ENCODE measurements at regions of chr12 and their contacts with region 1.

Region 1: DNA sequence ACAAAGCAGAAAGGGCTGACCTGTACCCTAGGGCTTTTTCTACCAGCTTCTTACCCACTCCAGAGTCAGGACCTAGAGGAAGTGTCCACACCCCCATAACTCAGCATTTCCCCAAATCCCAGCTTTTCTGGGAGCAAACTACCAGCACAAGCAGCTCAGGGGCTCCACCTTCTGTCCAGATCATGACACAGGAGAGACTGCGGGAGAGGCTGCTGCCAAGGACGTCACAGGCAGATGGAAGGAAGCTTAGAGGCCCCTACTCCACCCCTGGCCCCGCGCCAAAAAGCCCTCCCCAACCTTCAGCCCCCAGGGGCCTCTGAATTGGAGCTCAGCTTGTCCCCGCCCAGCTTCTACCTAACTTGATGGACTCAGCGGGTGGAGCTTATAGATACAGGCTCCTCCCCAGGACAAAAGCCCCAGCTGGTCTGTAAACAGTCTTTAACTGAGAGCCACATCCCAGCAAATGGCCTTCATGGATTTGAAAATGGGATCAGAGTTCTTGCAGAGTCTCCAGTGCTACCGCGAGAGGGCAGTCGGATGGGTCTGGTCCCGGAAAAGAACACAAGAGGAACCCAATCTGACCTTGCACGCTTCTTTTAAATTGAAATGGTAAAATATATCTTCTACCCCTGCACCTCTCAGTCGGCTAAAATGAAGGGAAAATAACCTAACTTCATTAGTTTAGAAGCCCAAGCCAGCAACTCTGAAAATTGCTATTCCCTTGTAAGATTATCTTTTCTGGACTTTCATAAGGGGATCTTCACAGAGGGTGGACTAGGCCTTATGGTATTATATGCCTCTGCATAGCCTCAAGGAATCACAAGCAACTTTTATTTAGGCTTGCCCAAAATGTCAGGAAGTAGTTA is 6.8 kb upstream of the BAZ2A start:
- DNase-seq: peak; percentile 98
- ATAC-seq: peak; percentile 69
- H3K4me3 ChIP-seq: peak overlapping the region; percentile 57 to 85 (median 78)
- H3K4me3 Mint-ChIP-seq: peak overlapping the region; percentile 89
- H3K27ac ChIP-seq: peak overlapping the region; percentile 75 to 83
- H3K27ac Mint-ChIP-seq: peak overlapping the region; percentile 95
- H3K4me1 ChIP-seq: peaks cover 46 to 53% of the 10 kb centered on the region in 2 donors
- H3K4me1 Mint-ChIP-seq: peaks cover 59% of the 10 kb centered on the region
- H3K27me3 ChIP-seq: no peaks in the 10 kb centered on the region
- H3K27me3 Mint-ChIP-seq: no peaks in the 10 kb centered on the region
- CTCF ChIP-seq: peak; percentile 70

Region 2: GRCh38 chr12:56299853-56300643 is 336.9 kb before region 1 on chr12 and contains the start of gene CS:
- CTCF ChIA-PET with region 1: no interaction called
- POLR2A ChIA-PET with region 1: no interaction called
- intact Hi-C with region 1: loop called (anchors 1 kb)
- DNase-seq: peak; percentile 98
- ATAC-seq: peak; percentile 96
- H3K4me3 ChIP-seq: peak within 1 kb of the TSS; percentile 78 to 91 (median 83)
- H3K4me3 Mint-ChIP-seq: peak within 1 kb of the TSS; percentile 98
- H3K27ac ChIP-seq: peak within 1 kb of the TSS; percentile 92 to 95
- H3K27ac Mint-ChIP-seq: peak within 1 kb of the TSS; percentile 97
- H3K4me1 ChIP-seq: peaks cover 51 to 61% of the 10 kb centered on the region in 2 donors
- H3K4me1 Mint-ChIP-seq: peaks cover 57% of the 10 kb centered on the region
- H3K27me3 ChIP-seq: no peaks in the 10 kb centered on the region
- H3K27me3 Mint-ChIP-seq: no peaks in the 10 kb centered on the region
- CTCF ChIP-seq: no peak
- total RNA-seq, gene CS: 151 and 154 TPM in 2 replicates

Region 3: GRCh38 chr12:56476972-56477432 is 159.9 kb before region 1 on chr12:
- CTCF ChIA-PET with region 1: no interaction called
- POLR2A ChIA-PET with region 1: no interaction called
- intact Hi-C with region 1: no loop called
- DNase-seq: no peak
- ATAC-seq: no peak
- H3K4me3 ChIP-seq: no peak overlapping the region
- H3K4me3 Mint-ChIP-seq: no peak overlapping the region
- H3K27ac ChIP-seq: no peak overlapping the region
- H3K27ac Mint-ChIP-seq: no peak overlapping the region
- H3K4me1 ChIP-seq: no peaks in the 10 kb centered on the region
- H3K4me1 Mint-ChIP-seq: peaks cover 5% of the 10 kb centered on the region
- H3K27me3 ChIP-seq: no peaks in the 10 kb centered on the region
- H3K27me3 Mint-ChIP-seq: no peaks in the 10 kb centered on the region
- CTCF ChIP-seq: no peak

Region 4: DNA sequence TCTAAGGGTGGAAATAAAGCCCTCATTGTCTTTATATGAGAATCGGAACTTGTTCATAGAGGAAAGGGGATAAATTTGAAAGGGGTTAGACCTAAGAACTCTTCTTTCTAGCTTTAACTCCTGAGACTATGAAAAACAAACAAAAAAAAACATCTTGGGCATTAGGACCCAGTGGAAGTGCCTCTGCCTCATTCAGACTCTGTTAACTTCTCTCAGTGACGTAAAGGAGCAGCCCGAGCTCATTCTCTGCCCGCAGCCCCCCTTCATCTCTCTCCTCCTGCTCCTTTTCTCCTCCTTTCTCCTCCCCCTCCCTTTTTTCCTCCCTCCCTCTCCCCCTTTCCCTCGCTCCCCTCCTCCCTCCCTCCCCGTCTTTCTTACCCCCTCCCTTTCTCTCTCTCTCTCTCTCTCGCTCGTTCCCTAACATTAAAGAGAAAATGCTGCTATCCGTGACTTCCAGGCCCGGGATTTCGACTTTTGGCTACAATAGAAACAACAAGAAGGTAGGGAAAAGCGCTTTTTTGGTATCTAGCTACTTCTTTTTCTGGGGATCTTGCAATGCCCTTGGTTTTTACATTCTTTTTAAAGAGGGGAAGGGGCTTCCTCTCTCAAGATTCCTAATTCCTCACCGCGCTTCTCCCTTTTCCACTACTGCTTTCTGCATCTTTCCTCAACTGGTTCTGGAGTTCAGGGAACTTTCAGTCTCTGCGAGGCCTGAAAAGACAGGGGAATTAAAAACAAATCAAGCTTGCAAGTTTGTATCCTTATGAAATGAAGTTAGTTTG is 115.1 kb before region 1 on chr12 and contains the start of gene RBMS2:
- CTCF ChIA-PET with region 1: interaction called, 14 read pairs
- POLR2A ChIA-PET with region 1: interaction called, 6 read pairs
- intact Hi-C with region 1: loop called (anchors 5 kb)
- DNase-seq: peak; percentile 66
- ATAC-seq: peak; percentile 76
- H3K4me3 ChIP-seq: peak within 1 kb of the TSS; percentile 41 to 48 (median 41)
- H3K4me3 Mint-ChIP-seq: peak within 1 kb of the TSS; percentile 85
- H3K27ac ChIP-seq: peak within 1 kb of the TSS in 1 of 2 donors; percentile 54
- H3K27ac Mint-ChIP-seq: peak within 1 kb of the TSS; percentile 47
- H3K4me1 ChIP-seq: peaks cover 12 to 20% of the 10 kb centered on the region in 2 donors
- H3K4me1 Mint-ChIP-seq: peaks cover 22% of the 10 kb centered on the region
- H3K27me3 ChIP-seq: no peaks in the 10 kb centered on the region
- H3K27me3 Mint-ChIP-seq: peaks cover 4% of the 10 kb centered on the region
- CTCF ChIP-seq: no peak
- total RNA-seq, gene RBMS2: 5.0 and 7.6 TPM in 2 replicates

Region 5: DNA sequence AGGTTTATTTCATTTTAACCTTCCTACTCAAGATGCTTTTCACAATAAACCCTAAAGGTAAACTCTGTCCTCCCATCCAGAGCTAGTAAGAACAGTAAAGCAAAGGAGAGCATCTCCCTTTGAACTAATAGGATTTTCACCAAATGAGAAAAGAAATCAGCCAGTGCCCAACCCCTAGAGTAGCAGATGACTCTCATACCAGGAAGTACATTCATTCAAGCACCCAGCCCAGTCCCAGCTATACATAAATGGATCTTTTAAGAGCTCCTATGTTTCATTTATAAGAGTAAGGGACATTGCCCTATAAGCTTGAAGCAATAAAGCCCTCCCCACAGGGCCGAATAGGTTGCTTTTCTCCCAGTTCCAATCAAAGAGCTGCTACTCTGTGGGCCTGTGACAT is 14.4 kb before region 1 on chr12:
- CTCF ChIA-PET with region 1: interaction called, 30 read pairs
- POLR2A ChIA-PET with region 1: interaction called, 15 read pairs
- intact Hi-C with region 1: no loop called
- DNase-seq: no peak
- ATAC-seq: no peak
- H3K4me3 ChIP-seq: no peak overlapping the region
- H3K4me3 Mint-ChIP-seq: no peak overlapping the region
- H3K27ac ChIP-seq: peak overlapping the region in 1 of 2 donors; percentile 56
- H3K27ac Mint-ChIP-seq: no peak overlapping the region
- H3K4me1 ChIP-seq: peaks cover 21 to 24% of the 10 kb centered on the region in 2 donors
- H3K4me1 Mint-ChIP-seq: peaks cover 59% of the 10 kb centered on the region
- H3K27me3 ChIP-seq: no peaks in the 10 kb centered on the region
- H3K27me3 Mint-ChIP-seq: no peaks in the 10 kb centered on the region
- CTCF ChIP-seq: no peak

Region 6: DNA sequence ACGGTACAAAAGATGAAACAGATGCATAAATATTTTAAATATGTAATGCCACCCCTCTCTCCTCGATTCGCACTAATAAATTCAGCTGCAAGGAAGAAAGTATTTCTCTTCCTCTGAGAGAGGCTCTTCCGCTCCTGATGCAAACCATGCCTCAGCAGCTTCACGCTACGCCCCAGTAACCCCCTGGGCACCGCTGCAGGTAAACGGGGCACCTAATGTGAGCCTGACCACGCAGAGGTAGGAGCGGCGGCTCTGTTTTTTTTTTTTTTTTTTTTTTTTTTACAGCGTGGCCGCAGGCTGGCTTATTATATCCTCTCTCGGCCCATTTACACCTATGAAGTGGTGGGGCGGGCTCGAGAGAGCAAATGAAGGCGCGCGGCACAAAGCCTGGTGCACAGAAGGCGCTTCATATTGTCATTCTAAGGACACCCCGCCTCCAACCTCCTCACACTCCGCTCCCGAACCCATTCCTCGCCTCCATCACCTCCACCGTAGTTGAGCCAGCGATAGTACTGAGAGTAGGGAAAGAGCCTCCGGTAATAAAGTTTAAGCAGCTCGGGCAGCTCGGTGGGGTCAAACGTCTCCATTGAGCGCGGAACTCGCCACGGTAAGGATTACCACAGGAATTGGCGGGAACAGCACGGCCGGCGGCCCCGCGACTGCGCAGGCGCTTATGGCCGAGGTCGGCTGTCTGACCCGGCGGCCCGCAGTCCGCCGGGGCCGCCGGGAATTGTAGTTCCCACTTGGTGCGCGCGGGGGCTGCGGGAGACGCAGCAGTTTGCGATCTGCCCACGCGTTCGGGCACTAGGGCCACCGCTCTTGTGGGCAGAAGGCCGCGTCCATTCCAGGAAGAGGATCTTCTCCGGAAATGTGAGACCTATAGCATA is 115.0 kb after region 1 on chr12 and contains the start of gene PRIM1:
- CTCF ChIA-PET with region 1: interaction called, 10 read pairs
- POLR2A ChIA-PET with region 1: interaction called, 7 read pairs
- intact Hi-C with region 1: loop called (anchors 5 kb)
- DNase-seq: peak; percentile 88
- ATAC-seq: peak; percentile 82
- H3K4me3 ChIP-seq: peak within 1 kb of the TSS; percentile 90 to 100 (median 97)
- H3K4me3 Mint-ChIP-seq: peak within 1 kb of the TSS; percentile 97
- H3K27ac ChIP-seq: peak within 1 kb of the TSS; percentile 79 to 80
- H3K27ac Mint-ChIP-seq: peak within 1 kb of the TSS; percentile 96
- H3K4me1 ChIP-seq: peaks cover 38% of the 10 kb centered on the region in 2 donors
- H3K4me1 Mint-ChIP-seq: peaks cover 44% of the 10 kb centered on the region
- H3K27me3 ChIP-seq: no peaks in the 10 kb centered on the region
- H3K27me3 Mint-ChIP-seq: no peaks in the 10 kb centered on the region
- CTCF ChIP-seq: peak; percentile 21
- total RNA-seq, gene PRIM1: 25.2 and 25.4 TPM in 2 replicates

Region 7: DNA sequence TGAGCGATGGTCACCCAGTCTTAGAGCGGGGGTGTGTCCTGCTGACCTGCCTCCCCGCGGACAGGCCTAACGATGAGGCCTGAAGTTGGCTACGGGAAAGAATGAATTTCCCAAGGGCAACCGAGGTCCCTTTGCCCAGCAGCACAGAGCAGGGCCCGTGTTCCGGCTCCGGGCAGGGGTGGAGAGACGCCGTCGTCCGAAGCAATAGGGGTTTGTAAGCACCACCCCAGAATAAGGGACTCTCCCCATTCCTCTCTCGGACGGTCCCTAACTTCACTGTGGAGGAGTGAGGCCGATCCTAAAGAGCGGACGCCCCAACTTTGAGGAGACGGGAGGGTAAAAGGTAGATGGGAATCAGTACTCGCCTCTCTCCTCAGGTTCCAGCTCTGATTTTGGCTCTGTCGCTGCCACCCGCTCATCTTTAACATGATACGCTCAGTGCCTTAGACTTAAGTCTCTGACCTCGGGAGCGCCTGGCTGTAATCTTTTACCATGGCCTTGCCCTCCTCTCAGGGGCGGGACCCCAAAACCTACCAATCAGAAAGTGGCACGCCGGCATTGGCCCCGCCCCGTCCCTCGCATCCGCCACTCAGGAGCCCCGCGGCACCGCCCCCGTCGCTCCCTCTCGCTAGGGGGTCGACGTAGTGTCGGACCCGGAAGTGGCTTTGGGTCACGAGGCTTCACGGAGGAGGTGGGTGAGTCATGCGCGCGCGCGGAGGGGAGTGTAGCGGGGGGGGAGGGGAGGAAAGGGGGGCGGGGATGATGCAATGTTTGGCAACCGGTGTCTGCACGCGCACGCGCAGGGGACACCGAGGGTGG is 883.4 kb after region 1 on chr12 and contains the start of gene DDIT3:
- CTCF ChIA-PET with region 1: no interaction called
- POLR2A ChIA-PET with region 1: no interaction called
- intact Hi-C with region 1: loop called (anchors 10 kb)
- DNase-seq: peak; percentile 100
- ATAC-seq: peak; percentile 75
- H3K4me3 ChIP-seq: peak within 1 kb of the TSS; percentile 97 to 100 (median 98)
- H3K4me3 Mint-ChIP-seq: peak within 1 kb of the TSS; percentile 99
- H3K27ac ChIP-seq: peak within 1 kb of the TSS; percentile 98 to 100
- H3K27ac Mint-ChIP-seq: peak within 1 kb of the TSS; percentile 100
- H3K4me1 ChIP-seq: peaks cover 42 to 53% of the 10 kb centered on the region in 2 donors
- H3K4me1 Mint-ChIP-seq: peaks cover 57% of the 10 kb centered on the region
- H3K27me3 ChIP-seq: no peaks in the 10 kb centered on the region
- H3K27me3 Mint-ChIP-seq: no peaks in the 10 kb centered on the region
- CTCF ChIP-seq: no peak
- total RNA-seq, gene DDIT3: 35.6 and 39.5 TPM in 2 replicates

Measured in B cell (primary cell).